ENCODE measurements at regions of chr1 and their contacts with region 1.

Region 1: DNA sequence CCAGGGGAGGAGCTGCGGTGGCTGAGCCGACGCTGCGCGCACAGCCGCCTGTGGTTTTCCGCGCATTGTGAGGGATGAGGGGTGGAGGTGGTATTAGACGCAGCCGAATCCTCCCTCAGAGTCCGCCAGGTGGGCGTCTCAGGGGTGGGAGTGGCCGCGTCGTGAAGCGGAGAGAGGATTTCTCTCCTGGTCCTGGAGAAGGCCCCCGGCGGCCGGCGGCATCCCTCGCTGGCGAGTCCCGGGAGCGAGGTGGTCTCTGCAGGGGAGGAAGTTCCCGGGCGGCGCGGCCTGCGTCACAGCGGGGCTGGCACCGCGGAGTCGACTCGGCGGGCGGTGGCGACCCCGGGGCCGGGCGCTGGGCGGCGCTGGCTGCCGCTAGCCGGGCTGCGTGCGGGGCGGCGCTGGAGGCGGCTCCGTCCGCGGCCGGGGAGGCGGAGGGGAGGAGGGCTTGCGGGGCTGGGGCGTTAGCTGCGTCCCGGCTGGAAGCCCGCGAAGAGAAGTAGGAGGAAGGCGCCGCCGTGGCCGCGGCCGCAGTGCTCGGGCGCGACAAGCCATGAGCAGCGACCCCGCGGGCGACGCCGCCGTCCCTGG is at the start of gene LRRC8C:
- DNase-seq: no peak
- ATAC-seq: peak; percentile 94
- H3K4me3 ChIP-seq: peak within 1 kb of the TSS; percentile 79 to 87
- H3K27ac ChIP-seq: peak within 1 kb of the TSS; percentile 91
- H3K4me1 ChIP-seq: peaks cover 36% of the 10 kb centered on the region
- H3K27me3 ChIP-seq: no peaks in the 10 kb centered on the region
- CTCF ChIP-seq: peak; percentile 98
- total RNA-seq, gene LRRC8C: 17.1 TPM

Region 2: DNA sequence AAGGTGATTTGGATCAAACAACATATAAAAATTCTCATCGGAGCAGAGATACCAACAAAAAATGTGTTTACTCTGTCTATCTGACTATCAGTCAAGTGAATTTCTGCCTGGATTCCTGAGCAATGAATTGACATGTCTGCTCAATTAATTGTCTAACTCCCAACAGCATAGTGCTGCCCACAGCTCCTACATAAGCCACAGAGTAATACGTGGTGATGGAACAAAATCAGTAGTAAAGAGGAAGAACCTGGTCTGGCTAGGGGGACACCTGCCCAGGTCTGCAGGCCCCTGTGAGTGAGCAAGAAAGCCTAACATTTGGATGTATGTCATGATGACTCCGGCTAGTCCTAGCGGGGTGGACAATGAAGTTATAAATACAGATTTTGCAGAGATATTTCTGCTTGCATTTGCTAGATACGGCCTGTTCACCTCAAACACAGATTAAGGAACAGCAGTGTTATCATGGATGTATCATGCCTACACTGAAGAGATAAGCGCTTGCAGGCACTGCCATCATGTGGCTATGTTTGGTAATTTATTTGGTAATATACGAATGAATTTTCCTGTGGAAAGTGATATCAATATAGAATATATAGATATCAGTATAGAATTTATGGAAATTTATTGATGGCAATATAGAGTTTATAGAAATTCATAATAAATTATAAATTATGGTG is 177.8 kb before region 1 on chr1:
- CTCF ChIA-PET with region 1: no interaction called
- POLR2A ChIA-PET with region 1: no interaction called
- in situ Hi-C with region 1: no loop called
- intact Hi-C with region 1: no loop called
- DNase-seq: peak; percentile 38
- ATAC-seq: peak; percentile 89
- H3K4me3 ChIP-seq: no peak overlapping the region
- H3K27ac ChIP-seq: no peak overlapping the region
- H3K4me1 ChIP-seq: 0 out of 2 replicates have a peak, but pooled peaks cover 3% of the 10 kb centered on the region
- H3K27me3 ChIP-seq: peaks cover 7% of the 10 kb centered on the region; the same call in 1 of the 2 replicates
- CTCF ChIP-seq: peak; percentile 79

Region 3: DNA sequence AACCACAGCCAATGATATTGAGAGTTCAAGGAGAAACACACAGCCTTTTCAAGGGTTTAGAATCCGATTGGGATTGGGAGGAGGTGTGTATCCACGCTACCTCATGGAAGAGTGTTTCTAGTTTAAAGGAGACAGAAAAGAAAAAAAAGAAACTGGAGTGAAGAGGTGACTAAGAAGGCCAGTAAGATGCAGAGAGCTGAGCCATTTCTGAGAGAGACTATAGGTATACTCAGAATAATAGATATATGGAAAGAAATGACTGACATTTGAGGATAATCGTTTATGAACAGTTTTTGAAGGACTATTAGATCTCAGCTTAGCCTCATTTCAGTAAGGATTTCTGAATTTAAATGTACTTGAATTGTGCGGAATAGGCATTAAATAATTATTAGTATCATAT is 42.9 kb after region 1 on chr1:
- CTCF ChIA-PET with region 1: no interaction called
- POLR2A ChIA-PET with region 1: no interaction called
- in situ Hi-C with region 1: no loop called
- intact Hi-C with region 1: loop called (anchors 5 kb)
- DNase-seq: no peak
- ATAC-seq: no peak
- H3K4me3 ChIP-seq: no peak overlapping the region
- H3K27ac ChIP-seq: no peak overlapping the region
- H3K4me1 ChIP-seq: no peaks in the 10 kb centered on the region
- H3K27me3 ChIP-seq: no peaks in the 10 kb centered on the region
- CTCF ChIP-seq: no peak

Region 4: DNA sequence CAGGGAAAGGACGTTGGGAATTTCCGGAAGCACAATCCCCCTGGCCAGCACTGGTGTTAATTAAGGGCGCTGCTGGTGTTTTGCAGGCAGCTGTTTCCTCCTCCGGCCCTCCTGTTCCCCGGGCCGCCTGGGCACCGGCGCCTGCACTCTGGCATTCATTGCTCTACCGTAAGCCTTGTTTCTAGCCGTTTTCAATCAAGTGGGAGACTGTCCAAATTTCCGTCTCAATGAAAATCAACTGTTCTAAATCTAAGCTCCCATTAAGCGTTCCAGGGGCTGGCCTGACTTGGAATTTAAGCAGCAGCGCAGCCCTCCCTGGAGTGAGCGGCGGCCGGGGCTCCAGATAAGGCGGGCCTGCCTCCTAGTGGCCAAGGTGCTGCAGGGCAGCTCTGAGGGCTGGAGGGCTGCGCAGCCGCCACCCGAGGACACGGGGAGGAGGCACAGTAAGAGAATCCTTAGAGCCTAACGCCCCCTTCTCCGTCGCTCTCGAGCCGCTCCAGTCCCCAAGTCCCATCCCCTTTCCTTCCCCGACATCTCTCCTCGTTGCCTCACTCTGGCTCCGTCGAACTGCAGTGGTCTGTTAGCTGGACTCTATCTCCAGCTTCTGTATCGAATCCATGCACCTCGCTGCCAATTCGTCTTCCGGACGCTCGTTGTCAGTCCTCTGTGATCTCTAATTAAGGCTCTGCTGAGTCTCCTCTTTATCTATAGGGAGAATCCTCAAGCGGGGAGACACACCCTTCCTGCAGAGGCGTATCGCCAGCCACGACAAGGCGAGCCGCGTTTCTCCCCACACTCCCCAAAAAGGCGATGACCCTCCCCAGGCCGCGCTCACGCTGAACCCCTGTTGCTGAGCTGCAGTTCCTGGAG is 130.3 kb after region 1 on chr1:
- CTCF ChIA-PET with region 1: interaction called, 28 read pairs
- POLR2A ChIA-PET with region 1: no interaction called
- in situ Hi-C with region 1: no loop called
- intact Hi-C with region 1: loop called (anchors 1 kb)
- DNase-seq: peak; percentile 48
- ATAC-seq: peak; percentile 100
- H3K4me3 ChIP-seq: peak overlapping the region; percentile 48 to 84
- H3K27ac ChIP-seq: peak overlapping the region; percentile 36; the same call in 1 of the 2 replicates
- H3K4me1 ChIP-seq: peaks cover 5% of the 10 kb centered on the region
- H3K27me3 ChIP-seq: peaks cover 3% of the 10 kb centered on the region; the same call in 1 of the 2 replicates
- CTCF ChIP-seq: peak; percentile 100

Region 5: DNA sequence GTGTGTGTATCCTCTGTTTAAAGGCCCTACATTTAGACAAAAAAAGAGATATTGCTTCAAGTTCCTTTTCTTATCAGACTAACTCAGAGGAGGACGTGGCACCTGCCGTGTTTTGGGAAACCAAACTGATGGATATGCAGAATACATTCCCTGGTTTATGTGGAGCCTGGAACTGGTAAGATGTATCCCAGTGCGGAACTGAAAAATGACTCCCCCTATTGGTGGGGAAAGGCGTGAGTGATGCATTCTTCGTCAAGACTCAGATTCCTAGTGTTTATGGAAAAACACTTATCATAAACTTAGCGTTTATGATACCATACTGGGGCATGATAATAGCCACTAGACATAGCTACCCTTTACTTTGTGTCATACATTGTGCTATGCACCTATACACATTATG is 516.3 kb after region 1 on chr1:
- CTCF ChIA-PET with region 1: interaction called, 11 read pairs
- POLR2A ChIA-PET with region 1: no interaction called
- in situ Hi-C with region 1: no loop called
- intact Hi-C with region 1: no loop called
- DNase-seq: no peak
- ATAC-seq: no peak
- H3K4me3 ChIP-seq: no peak overlapping the region
- H3K27ac ChIP-seq: no peak overlapping the region
- H3K4me1 ChIP-seq: no peaks in the 10 kb centered on the region
- H3K27me3 ChIP-seq: no peaks in the 10 kb centered on the region
- CTCF ChIP-seq: peak; percentile 32; the same call in 1 of the 2 replicates